ENCODE measurements at regions of chr16 and their contacts with region 1.

Region 1: DNA sequence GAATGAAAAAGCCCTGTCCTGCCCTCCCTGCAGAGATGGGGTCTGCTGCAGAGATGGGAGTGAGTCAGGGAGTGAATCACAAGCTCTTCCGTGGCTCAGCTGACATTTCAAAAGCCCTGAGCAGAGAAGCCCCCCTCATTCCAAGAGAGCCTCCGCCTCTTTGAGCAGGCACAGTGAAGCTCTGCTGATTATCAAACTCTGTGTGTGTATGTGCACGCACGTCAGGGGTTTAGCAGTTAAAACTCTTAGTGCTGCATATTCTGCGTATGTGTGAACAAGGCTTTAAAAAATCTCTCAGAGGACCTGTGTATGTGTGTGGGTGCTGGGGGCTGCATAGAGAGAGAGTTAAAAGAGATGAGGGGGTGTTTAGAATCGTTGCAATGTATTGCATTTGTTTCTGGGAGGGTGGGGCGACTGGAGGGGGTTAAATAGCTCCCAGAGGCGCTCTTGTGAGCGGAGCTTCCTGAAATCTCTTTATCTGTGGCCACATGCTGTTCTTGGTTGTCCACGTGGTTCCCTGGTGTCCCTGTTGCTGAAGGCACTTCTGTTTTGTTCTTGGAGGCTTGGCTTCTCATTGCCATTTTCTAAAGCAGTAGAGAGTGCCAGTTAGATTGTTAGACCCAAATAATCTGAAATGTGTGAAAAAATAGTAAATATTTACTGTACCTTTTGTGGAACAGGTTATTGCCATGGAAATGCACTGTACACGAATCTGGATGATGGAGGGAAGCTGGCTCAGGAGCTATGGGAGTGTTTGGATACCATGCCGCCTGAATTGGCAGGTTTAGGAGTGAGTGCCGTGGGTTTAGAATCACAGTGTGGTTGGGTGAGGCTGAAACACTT is 116.6 kb downstream of the PRKCB start:
- DNase-seq: peak in 3 of 9 donors; percentile 16 to 22 (median 17)
- ATAC-seq: peak; percentile 24
- H3K4me3 ChIP-seq: peak overlapping the region; percentile 14
- H3K4me3 Mint-ChIP-seq: peak overlapping the region; percentile 19 to 82 (median 72)
- H3K27ac ChIP-seq: peak overlapping the region; percentile 46
- H3K27ac Mint-ChIP-seq: peak overlapping the region; percentile 30 to 99 (median 91)
- H3K4me1 ChIP-seq: peaks cover 52 to 67% of the 10 kb centered on the region in 2 donors
- H3K4me1 Mint-ChIP-seq: peaks cover 68 to 95% (median 91%) of the 10 kb centered on the region in 7 donors
- H3K27me3 ChIP-seq: no peaks in the 10 kb centered on the region
- H3K27me3 Mint-ChIP-seq: no peaks in the 10 kb centered on the region

Region 2: GRCh38 chr16:23826528-23827045 is 125.8 kb before region 1 on chr16:
- CTCF ChIA-PET with region 1: no interaction called
- POLR2A ChIA-PET with region 1: interaction called, 4 read pairs
- intact Hi-C with region 1: loop called in 1 of 2 experiments (anchors 5 kb)
- DNase-seq: peak in 7 of 9 donors; percentile 48 to 76 (median 62)
- ATAC-seq: peak; percentile 94
- H3K4me3 ChIP-seq: peak overlapping the region; percentile 8
- H3K4me3 Mint-ChIP-seq: peak overlapping the region; percentile 35 to 87 (median 69)
- H3K27ac ChIP-seq: peak overlapping the region; percentile 31
- H3K27ac Mint-ChIP-seq: peak overlapping the region; percentile 54 to 94 (median 88)
- H3K4me1 ChIP-seq: peaks cover 22 to 23% of the 10 kb centered on the region in 2 donors
- H3K4me1 Mint-ChIP-seq: peaks cover 31 to 44% (median 35%) of the 10 kb centered on the region in 7 donors
- H3K27me3 ChIP-seq: no peaks in the 10 kb centered on the region
- H3K27me3 Mint-ChIP-seq: peaks cover 0 to 3% (median 0%) of the 10 kb centered on the region in 5 donors

Region 3: DNA sequence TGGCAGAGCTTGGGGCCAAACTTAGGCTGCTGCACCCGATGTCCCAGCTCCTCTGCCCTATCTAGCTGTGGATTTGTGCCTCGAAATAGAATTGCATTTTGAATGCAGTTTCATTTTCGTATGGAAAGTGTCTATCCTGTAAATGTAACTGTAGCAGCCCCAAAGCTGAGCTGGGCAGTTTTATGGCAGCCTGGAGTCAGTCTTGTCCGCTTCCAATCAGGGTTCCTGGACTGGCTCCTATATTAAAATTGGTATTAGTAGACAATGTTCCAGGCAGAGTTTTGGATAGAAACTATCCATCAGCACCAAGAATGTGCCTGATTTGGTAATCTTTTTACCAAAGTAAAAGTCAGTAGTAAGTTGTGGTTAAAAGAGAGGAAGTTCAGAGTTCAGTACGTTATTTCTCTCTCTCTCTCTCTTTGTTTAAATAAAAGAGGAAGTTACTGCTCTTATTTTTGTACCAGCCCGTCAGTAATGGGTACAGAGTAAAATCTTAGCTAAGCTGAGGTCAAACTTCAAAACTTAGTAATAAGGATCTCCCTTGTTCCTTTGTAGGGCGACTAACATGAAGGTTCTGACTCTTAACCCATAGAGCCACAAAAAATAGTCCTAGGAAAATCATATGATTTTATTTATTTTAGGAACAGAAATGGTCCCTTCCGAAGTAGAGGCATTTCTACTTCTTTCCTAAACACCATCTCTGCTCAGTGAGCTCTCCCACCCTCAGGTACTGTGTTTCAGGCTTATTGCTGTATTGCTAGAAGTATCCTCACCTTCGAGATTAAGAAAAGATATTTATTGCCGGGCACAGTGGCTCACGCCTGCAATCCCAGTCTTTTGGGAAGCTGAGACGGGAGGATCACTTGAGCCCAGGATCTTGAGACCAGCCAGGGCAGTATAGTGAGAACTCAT is 88.6 kb before region 1 on chr16:
- CTCF ChIA-PET with region 1: interaction called, 3 read pairs
- POLR2A ChIA-PET with region 1: interaction called, 5 read pairs
- intact Hi-C with region 1: loop called (anchors 1 to 5 kb)
- DNase-seq: peak in 7 of 9 donors; percentile 24 to 70 (median 67)
- ATAC-seq: peak; percentile 92
- H3K4me3 ChIP-seq: peak overlapping the region; percentile 59
- H3K4me3 Mint-ChIP-seq: peak overlapping the region; percentile 84 to 92 (median 89)
- H3K27ac ChIP-seq: peak overlapping the region; percentile 61
- H3K27ac Mint-ChIP-seq: peak overlapping the region; percentile 87 to 95 (median 93)
- H3K4me1 ChIP-seq: peaks cover 43 to 69% of the 10 kb centered on the region in 2 donors
- H3K4me1 Mint-ChIP-seq: peaks cover 63 to 96% (median 87%) of the 10 kb centered on the region in 7 donors
- H3K27me3 ChIP-seq: no peaks in the 10 kb centered on the region
- H3K27me3 Mint-ChIP-seq: no peaks in the 10 kb centered on the region

Region 4: GRCh38 chr16:23896832-23897821 is 55.2 kb before region 1 on chr16:
- CTCF ChIA-PET with region 1: interaction called, 3 read pairs
- POLR2A ChIA-PET with region 1: interaction called, 5 read pairs
- intact Hi-C with region 1: loop called in 1 of 2 experiments (anchors 2 kb)
- DNase-seq: peak in 4 of 9 donors; percentile 24 to 37 (median 29)
- ATAC-seq: peak; percentile 60
- H3K4me3 ChIP-seq: no peak overlapping the region
- H3K4me3 Mint-ChIP-seq: peak overlapping the region; percentile 45 to 82 (median 70)
- H3K27ac ChIP-seq: peak overlapping the region; percentile 15
- H3K27ac Mint-ChIP-seq: peak overlapping the region; percentile 30 to 86 (median 69)
- H3K4me1 ChIP-seq: peaks cover 17 to 23% of the 10 kb centered on the region in 2 donors
- H3K4me1 Mint-ChIP-seq: peaks cover 27 to 85% (median 75%) of the 10 kb centered on the region in 7 donors
- H3K27me3 ChIP-seq: no peaks in the 10 kb centered on the region
- H3K27me3 Mint-ChIP-seq: no peaks in the 10 kb centered on the region

Region 5: GRCh38 chr16:24010440-24011089 is 58.2 kb after region 1 on chr16:
- CTCF ChIA-PET with region 1: interaction called, 9 read pairs
- POLR2A ChIA-PET with region 1: interaction called, 3 read pairs
- intact Hi-C with region 1: loop called (anchors 1 to 5 kb)
- DNase-seq: peak; percentile 46 to 82 (median 73)
- ATAC-seq: peak; percentile 58
- H3K4me3 ChIP-seq: no peak overlapping the region
- H3K4me3 Mint-ChIP-seq: no peak overlapping the region
- H3K27ac ChIP-seq: no peak overlapping the region
- H3K27ac Mint-ChIP-seq: peak overlapping the region in 5 of 9 donors; percentile 1 to 78 (median 37)
- H3K4me1 ChIP-seq: peaks cover 41 to 43% of the 10 kb centered on the region in 2 donors
- H3K4me1 Mint-ChIP-seq: peaks cover 46 to 70% (median 57%) of the 10 kb centered on the region in 7 donors
- H3K27me3 ChIP-seq: no peaks in the 10 kb centered on the region
- H3K27me3 Mint-ChIP-seq: no peaks in the 10 kb centered on the region

Measured in naive thymus-derived CD4-positive, alpha-beta T cell (primary cell).